Panc1 (cell line): ENCODE measurements at regions of chr5 and their contacts with region 1.

Region 1: DNA sequence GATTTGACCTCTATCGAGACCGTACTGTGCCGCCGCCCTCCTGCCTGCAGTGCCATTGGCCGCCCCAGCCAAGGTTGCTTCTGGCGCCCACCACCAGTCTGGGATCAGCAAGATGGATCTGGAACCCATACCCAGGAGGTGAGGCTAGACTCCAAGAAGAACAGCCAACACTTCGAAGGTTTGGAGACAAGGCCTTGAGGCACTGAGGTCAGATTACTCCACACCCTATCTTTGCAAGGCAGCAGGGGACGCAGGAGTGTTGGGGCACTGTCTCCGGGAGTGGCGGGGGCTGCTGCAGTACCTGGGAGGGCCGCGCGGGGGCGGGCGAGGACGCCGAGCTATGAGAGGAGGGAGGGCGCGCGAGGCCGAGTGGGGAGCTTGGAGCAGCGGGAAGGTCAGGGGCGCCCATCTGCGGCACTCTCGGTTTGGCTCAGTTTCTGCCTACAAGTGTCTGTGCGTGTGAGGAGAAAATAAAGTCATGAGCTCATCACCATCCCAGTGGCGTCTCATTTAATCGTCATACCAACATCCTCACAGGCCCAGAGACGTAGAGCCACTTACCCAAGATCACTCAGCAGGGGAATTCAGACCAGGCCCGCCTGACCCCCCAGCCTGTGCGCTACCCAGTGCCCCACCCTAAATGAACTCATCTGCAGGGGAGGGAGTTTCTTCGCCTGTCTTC is 20.5 kb upstream of the PSD2 start:
- DNase-seq: no peak
- ATAC-seq: peak; percentile 93
- H3K4me3 ChIP-seq: no peak overlapping the region
- H3K27ac ChIP-seq: no peak overlapping the region
- H3K4me1 ChIP-seq: no peaks in the 10 kb centered on the region
- H3K27me3 ChIP-seq: 0 out of 2 replicates have a peak, but pooled peaks cover 2% of the 10 kb centered on the region
- CTCF ChIP-seq: peak; percentile 98

Region 2: GRCh38 chr5:139633295-139634027 is 141.7 kb before region 1 on chr5:
- CTCF ChIA-PET with region 1: interaction called, 10 read pairs
- POLR2A ChIA-PET with region 1: no interaction called
- in situ Hi-C with region 1: no loop called
- intact Hi-C with region 1: no loop called
- DNase-seq: peak; percentile 79
- ATAC-seq: peak; percentile 70
- H3K4me3 ChIP-seq: no peak overlapping the region
- H3K27ac ChIP-seq: peak overlapping the region; percentile 19; the same call in 1 of the 2 replicates
- H3K4me1 ChIP-seq: peaks cover 32% of the 10 kb centered on the region
- H3K27me3 ChIP-seq: no peaks in the 10 kb centered on the region
- CTCF ChIP-seq: peak; percentile 98